Activated CD4-positive, alpha-beta T cell treated with anti-CD3 and anti-CD28 coated beads for 36 hours (primary cell): ENCODE measurements at regions of chr3 and their contacts with region 1.

Region 1: GRCh38 chr3:66378256-66378823 is 122.5 kb downstream of the LRIG1 start:
- DNase-seq: peak; percentile 56
- ATAC-seq: peak; percentile 30
- H3K4me3 Mint-ChIP-seq: no peak overlapping the region
- H3K27ac Mint-ChIP-seq: peak overlapping the region; percentile 67
- H3K4me1 Mint-ChIP-seq: peaks cover 8% of the 10 kb centered on the region
- H3K27me3 Mint-ChIP-seq: no peaks in the 10 kb centered on the region

Region 2: GRCh38 chr3:66394019-66394752 is 15.8 kb after region 1 on chr3:
- CTCF ChIA-PET with region 1: interaction called, 11 read pairs
- POLR2A ChIA-PET with region 1: no interaction called
- intact Hi-C with region 1: no loop called
- DNase-seq: peak; percentile 45
- ATAC-seq: peak; percentile 90
- H3K4me3 Mint-ChIP-seq: peak overlapping the region; percentile 13
- H3K27ac Mint-ChIP-seq: peak overlapping the region; percentile 80
- H3K4me1 Mint-ChIP-seq: peaks cover 32% of the 10 kb centered on the region
- H3K27me3 Mint-ChIP-seq: no peaks in the 10 kb centered on the region

Region 3: GRCh38 chr3:66544619-66545429 is 166.5 kb after region 1 on chr3:
- CTCF ChIA-PET with region 1: no interaction called
- POLR2A ChIA-PET with region 1: no interaction called
- intact Hi-C with region 1: no loop called
- DNase-seq: no peak
- ATAC-seq: no peak
- H3K4me3 Mint-ChIP-seq: no peak overlapping the region
- H3K27ac Mint-ChIP-seq: no peak overlapping the region
- H3K4me1 Mint-ChIP-seq: no peaks in the 10 kb centered on the region
- H3K27me3 Mint-ChIP-seq: no peaks in the 10 kb centered on the region

Region 4: DNA sequence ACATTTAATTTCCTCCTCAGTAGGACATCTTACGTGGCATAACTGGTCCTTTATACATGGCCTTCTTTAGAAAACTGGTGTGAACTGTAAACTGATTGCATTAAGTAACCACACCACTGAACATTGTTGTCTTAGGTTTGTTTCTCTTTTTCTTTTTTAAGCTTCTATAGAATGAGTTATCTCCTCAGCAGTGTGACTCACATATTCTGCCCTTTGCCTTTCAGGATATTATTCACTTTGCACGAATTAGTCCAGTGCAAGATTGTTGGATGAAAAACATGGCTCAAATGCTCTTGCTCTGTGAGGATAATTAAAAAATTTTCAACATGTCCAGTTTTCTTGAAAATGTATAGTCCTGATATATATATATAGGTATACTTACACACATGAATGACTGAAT is 767.4 kb after region 1 on chr3:
- CTCF ChIA-PET with region 1: no interaction called
- POLR2A ChIA-PET with region 1: no interaction called
- intact Hi-C with region 1: no loop called
- DNase-seq: no peak
- ATAC-seq: no peak
- H3K4me3 Mint-ChIP-seq: no peak overlapping the region
- H3K27ac Mint-ChIP-seq: no peak overlapping the region
- H3K4me1 Mint-ChIP-seq: no peaks in the 10 kb centered on the region
- H3K27me3 Mint-ChIP-seq: peaks cover 2% of the 10 kb centered on the region

Region 5: DNA sequence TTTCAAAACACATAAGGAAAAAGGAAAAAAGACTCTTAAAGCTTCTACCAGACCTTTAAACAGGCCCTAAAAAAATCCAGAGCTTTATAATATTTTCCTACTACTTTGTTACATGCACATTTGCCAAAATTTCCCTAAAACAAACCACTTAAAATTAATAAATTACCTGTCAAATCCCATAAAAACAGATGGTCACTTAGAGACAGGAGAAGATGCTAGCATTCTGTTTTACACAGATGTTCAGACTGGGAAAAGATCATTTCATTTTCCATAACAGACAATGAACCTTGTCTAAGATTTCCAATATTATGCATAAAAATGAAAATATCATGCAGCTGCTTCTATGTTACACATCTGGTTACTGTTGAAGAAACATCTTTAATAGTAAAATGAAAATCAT is 1209.5 kb after region 1 on chr3:
- CTCF ChIA-PET with region 1: no interaction called
- POLR2A ChIA-PET with region 1: no interaction called
- intact Hi-C with region 1: no loop called
- DNase-seq: no peak
- ATAC-seq: no peak
- H3K4me3 Mint-ChIP-seq: no peak overlapping the region
- H3K27ac Mint-ChIP-seq: no peak overlapping the region
- H3K4me1 Mint-ChIP-seq: peaks cover 32% of the 10 kb centered on the region
- H3K27me3 Mint-ChIP-seq: no peaks in the 10 kb centered on the region